ENCODE measurements at regions of chr1 and their contacts with region 1.

Region 1: DNA sequence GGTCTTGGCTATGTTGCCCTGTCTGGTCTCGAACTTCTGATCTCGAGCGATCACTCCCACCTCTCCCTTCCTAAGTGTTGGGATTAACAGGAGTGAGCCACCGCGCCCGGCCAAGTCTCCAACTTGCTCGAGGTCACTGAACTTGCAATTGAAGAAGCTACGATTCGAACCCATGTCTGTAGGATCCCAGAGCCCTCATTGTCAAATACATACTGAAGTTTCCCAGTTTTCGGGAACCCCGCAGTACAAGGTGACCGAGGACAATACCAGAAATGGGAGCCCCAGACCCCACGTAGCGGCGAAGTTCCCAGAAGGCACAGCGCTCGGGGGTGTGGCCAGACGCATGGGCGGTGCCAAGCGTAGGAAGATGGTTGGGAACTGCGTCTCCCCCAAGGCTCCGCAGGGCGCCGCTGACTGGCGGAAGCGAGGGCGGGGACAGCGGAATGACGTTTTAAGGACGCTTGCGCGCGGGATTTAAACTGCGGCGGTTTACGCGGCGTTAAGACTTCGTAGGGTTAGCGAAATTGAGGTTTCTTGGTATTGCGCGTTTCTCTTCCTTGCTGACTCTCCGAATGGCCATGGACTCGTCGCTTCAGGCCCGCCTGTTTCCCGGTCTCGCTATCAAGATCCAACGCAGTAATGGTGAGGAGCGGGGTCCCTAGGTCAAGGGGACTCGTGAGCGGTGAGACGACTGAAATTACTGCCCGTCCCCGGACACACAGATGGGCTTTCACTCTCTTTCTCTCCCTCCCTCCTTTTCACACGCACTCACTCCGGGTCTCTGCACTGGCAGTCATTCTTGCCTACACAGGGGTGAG is at the start of gene KIF2C:
- DNase-seq: peak; percentile 98 to 99
- ATAC-seq: peak; percentile 99
- H3K4me3 ChIP-seq: peak within 1 kb of the TSS; percentile 23 to 47
- H3K27ac ChIP-seq: peak within 1 kb of the TSS in 1 of 2 donors; percentile 18
- H3K4me1 ChIP-seq: no peaks in the 10 kb centered on the region
- H3K27me3 ChIP-seq: no peaks in the 10 kb centered on the region
- total RNA-seq, gene KIF2C: 0.84 to 3.5 TPM

Region 2: DNA sequence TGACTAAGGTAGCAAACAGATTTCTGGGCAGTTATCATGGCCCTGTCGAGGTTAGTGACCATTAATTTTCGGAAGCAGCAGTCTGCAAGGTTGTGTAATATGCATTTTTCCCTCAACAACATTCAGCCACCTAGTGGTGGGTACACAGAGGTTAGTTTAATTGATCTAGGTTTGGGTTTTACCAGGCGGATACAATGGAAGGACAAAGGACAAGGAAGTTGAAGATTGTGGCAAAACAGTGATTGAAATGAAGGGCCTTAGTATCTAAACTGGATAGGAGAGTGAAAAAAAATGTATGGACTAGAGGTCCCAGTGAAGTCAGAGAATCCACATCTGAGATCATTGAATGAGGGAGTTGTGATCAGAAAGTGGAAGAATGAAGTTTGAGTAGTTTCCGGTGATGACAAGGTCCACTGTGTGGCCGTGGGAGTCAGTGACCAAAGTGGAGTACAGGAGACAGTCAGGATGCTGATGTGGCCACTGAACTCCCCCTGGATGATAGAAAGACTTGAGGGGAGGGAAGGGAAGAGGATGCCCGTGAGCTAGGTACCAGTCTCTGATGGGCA is 62.3 kb before region 1 on chr1:
- intact Hi-C with region 1: no loop called
- DNase-seq: no peak
- ATAC-seq: no peak
- H3K4me3 ChIP-seq: no peak overlapping the region
- H3K27ac ChIP-seq: no peak overlapping the region
- H3K4me1 ChIP-seq: peaks cover 0 to 4% of the 10 kb centered on the region in 2 donors
- H3K27me3 ChIP-seq: no peaks in the 10 kb centered on the region

Region 3: DNA sequence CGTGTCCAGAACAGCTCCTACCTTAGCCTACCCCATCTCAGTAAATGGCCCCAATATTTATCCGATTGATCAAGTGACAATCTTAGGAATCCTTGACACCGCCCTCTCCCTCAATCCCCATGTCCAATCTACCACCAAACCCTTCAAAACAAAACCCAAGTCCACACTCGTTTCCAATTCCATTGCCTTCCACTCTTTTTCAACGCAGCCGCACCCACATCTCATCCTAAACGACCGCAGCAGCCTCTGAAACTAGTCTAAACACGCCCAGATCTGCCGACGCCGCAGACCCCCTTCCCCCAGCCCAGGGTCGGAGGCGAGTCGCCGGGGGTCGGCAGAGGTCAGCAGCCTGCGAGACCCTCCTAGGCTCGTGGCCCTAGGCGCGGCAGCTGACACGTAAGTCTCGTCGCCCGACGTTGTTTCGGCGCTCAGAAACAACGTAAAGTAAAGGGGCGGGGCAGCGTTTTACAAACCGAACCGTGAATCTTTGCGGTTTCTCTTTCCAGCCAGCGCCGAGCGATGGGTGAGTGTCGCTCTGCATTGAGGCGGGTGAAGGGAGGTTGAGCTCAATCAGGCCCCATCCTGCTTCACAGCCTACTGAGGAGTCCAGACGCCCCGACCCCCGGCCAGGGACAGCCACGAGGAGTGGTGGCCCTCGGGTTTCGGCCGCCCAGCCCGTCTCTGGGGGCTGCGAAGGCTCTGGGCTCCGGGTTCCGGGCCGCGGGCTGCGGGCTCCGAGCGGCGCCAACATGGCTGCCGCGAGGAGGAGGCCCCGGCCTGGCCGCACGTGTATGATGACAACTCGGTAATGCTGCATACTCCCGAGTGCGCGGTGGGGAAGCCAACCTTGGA is 35.7 kb after region 1 on chr1 and contains the start of gene RPS8:
- intact Hi-C with region 1: loop called (anchors 2 to 5 kb)
- DNase-seq: peak; percentile 94 to 95
- ATAC-seq: peak; percentile 96
- H3K4me3 ChIP-seq: peak within 1 kb of the TSS; percentile 38 to 66
- H3K27ac ChIP-seq: peak within 1 kb of the TSS; percentile 43 to 91
- H3K4me1 ChIP-seq: no peaks in the 10 kb centered on the region
- H3K27me3 ChIP-seq: no peaks in the 10 kb centered on the region
- total RNA-seq, gene RPS8: 1,373 to 1,500 TPM

Measured in aorta (tissue), 5 donors.